Heart right ventricle (tissue), 16 donors: ENCODE measurements at regions of chr19 and their contacts with region 1.

Region 1: GRCh38 chr19:3304871-3305423 is 61.4 kb upstream of the NFIC start:
- DNase-seq: peak; percentile 67 to 72
- ATAC-seq: peak in 7 of 8 donors; percentile 43 to 69 (median 58)
- H3K4me3 ChIP-seq: no peak overlapping the region
- H3K27ac ChIP-seq: no peak overlapping the region
- H3K4me1 ChIP-seq: peaks cover 0 to 9% (median 4%) of the 10 kb centered on the region in 9 donors
- H3K27me3 ChIP-seq: peaks cover 0 to 71% (median 47%) of the 10 kb centered on the region in 7 donors
- CTCF ChIP-seq: peak; percentile 83 to 91 (median 89)

Region 2: DNA sequence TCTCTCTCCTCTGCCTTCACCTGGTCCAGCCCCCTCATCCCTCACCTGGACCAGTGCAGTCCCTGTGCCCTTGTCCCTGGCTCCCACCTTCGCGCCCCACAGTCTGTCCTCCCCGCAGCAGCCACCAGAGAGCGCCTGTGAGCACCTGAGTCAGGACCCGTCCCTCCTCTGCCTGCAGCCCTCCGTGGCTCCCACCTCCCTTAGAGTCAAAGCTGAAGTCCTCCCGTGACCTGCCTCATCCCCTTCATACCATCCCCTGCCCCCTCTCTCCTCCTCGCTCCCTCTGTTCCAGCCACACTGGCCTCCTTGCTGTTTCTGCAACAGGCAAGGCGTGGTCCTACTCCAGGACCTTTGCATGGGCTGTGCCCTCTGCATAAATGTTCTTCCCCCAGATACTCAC is 70.1 kb before region 1 on chr19:
- intact Hi-C with region 1: no loop called
- DNase-seq: no peak
- ATAC-seq: no peak
- H3K4me3 ChIP-seq: no peak overlapping the region
- H3K27ac ChIP-seq: no peak overlapping the region
- H3K4me1 ChIP-seq: no peaks in the 10 kb centered on the region
- H3K27me3 ChIP-seq: peaks cover 0 to 35% (median 15%) of the 10 kb centered on the region in 7 donors
- CTCF ChIP-seq: peak in 1 of 9 donors; percentile 6

Region 3: DNA sequence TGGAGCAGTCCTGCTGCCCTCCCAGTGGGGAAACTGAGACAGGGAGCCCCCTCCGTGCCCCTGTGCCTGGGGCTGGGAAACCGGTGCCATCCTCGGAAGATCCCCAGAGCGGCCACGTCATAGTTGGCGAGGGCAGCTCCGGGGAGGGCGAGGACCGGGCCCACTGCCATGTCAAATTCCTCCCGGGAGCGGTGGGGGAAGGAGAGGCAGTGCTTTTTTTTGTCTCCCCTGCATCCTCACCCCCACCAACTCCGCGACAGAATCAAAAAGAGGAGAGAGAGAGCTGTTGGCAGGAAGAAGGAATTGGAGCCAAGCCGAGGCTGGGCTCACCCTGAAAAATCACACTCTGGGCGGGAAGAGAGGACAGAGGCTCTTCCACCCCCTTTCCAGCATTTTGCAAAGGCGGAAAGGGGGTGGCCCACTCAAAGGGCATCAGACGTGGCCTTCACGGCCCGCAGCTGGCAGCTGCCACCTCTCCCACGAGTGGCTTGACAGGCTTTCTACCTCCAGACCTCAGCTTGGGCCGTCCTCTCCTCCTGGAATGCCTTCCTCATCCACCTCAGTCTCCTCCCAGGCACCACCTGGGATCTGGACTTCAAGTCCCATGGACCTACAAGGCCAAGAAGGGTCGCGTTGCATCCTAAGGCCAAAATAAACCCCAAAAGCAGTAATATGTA is 41.9 kb after region 1 on chr19:
- intact Hi-C with region 1: no loop called
- DNase-seq: peak; percentile 69 to 80
- ATAC-seq: peak; percentile 44 to 86 (median 64)
- H3K4me3 ChIP-seq: peak overlapping the region in 5 of 10 donors; percentile 16 to 35 (median 28)
- H3K27ac ChIP-seq: peak overlapping the region; percentile 3 to 85 (median 68)
- H3K4me1 ChIP-seq: peaks cover 11 to 31% (median 27%) of the 10 kb centered on the region in 9 donors
- H3K27me3 ChIP-seq: no peaks in the 10 kb centered on the region
- CTCF ChIP-seq: no peak

Region 4: DNA sequence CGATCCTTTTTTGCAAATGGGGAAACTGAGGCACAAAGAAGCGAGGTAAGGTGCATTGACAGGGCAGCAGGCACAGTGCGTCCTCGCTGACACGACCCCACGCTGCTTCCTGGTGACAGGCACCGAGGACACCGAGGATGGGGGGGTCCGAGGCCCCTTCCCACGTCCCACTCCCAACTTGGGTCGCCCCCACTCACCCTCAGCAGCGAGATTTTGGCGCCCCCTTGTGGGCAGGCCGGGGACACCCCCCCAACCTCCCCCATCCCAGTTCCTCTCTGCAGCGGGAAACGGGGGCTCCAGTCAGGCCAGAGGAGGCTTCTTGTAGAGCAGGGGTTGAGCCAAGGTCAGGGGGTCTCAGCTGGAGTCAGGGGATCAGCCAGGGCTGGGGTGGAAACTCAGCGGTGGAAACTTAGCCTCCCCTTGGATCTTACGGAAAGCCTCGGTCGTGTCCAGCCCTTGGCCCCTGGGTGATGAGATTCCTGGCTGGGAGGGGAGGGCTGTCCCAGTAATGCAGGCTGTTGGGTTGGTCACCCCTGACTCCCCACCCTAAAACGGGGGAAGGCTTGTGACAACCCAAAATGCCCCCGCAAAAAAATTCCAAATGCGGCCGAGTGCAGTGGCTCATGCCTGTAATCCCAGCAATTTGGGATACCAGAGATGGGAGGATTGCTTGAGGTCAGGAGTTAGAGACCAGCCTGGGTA is 167.2 kb after region 1 on chr19:
- intact Hi-C with region 1: loop called in 4 of 10 experiments (anchors 1 to 5 kb)
- DNase-seq: peak; percentile 34 to 58
- ATAC-seq: peak; percentile 35 to 74 (median 64)
- H3K4me3 ChIP-seq: no peak overlapping the region
- H3K27ac ChIP-seq: no peak overlapping the region
- H3K4me1 ChIP-seq: peaks cover 3 to 36% (median 10%) of the 10 kb centered on the region in 9 donors
- H3K27me3 ChIP-seq: peaks cover 0 to 5% (median 0%) of the 10 kb centered on the region in 7 donors
- CTCF ChIP-seq: peak; percentile 83 to 95 (median 89)

Region 5: DNA sequence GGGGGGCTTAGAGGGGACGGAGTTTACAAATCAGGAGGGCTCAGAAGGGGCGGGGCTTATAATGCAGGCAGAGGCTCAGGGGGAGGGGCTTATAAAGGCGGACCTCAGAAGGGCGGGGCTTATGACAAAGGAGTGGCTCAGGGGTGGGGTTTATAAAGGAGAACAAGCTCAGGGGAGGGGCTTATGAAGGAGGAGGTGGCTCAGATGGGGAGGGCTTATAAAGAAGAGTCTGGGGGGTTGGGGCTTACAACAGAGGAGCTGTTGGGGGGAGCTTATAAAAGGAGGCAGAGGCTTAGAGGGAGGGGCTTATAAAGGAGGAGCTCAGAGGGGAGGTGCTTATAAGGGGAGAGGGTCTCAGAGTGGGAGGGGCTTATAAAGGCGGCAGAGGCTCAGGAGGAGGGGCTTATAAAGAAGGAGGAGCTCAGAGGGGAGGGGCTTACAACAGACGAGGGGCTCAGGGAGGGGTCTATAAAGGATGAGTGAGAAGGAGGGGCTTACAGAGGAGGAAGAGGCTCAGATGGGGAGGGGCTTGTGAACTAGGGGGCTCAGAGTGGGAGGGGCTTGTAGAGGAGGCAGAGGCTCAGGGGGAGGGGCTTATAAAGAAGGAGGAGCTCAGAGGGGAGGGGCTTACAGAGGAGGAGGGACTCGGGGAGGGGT is 174.4 kb after region 1 on chr19:
- intact Hi-C with region 1: loop called in 2 of 10 experiments (anchors 5 kb)
- DNase-seq: no peak
- ATAC-seq: no peak
- H3K4me3 ChIP-seq: no peak overlapping the region
- H3K27ac ChIP-seq: no peak overlapping the region
- H3K4me1 ChIP-seq: peaks cover 0 to 3% (median 0%) of the 10 kb centered on the region in 9 donors
- H3K27me3 ChIP-seq: peaks cover 15 to 50% (median 42%) of the 10 kb centered on the region in 7 donors
- CTCF ChIP-seq: no peak

Region 6: GRCh38 chr19:3494051-3494450 is 189.1 kb after region 1 on chr19:
- intact Hi-C with region 1: loop called in 1 of 10 experiments (anchors 5 kb)
- DNase-seq: no peak
- ATAC-seq: peak in 4 of 8 donors; percentile 5 to 51 (median 38)
- H3K4me3 ChIP-seq: no peak overlapping the region
- H3K27ac ChIP-seq: no peak overlapping the region
- H3K4me1 ChIP-seq: peaks cover 0 to 5% (median 1%) of the 10 kb centered on the region in 9 donors
- H3K27me3 ChIP-seq: no peaks in the 10 kb centered on the region
- CTCF ChIP-seq: no peak